ENCODE measurements at regions of chr17 and their contacts with region 1.

Region 1: GRCh38 chr17:40531051-40531991 is 29.9 kb upstream of the TNS4 start:
- DNase-seq: peak; percentile 85
- H3K4me3 Mint-ChIP-seq: peak overlapping the region; percentile 85
- H3K27ac Mint-ChIP-seq: peak overlapping the region; percentile 99
- H3K4me1 Mint-ChIP-seq: peaks cover 71% of the 10 kb centered on the region
- H3K27me3 Mint-ChIP-seq: peaks cover 2% of the 10 kb centered on the region

Region 2: DNA sequence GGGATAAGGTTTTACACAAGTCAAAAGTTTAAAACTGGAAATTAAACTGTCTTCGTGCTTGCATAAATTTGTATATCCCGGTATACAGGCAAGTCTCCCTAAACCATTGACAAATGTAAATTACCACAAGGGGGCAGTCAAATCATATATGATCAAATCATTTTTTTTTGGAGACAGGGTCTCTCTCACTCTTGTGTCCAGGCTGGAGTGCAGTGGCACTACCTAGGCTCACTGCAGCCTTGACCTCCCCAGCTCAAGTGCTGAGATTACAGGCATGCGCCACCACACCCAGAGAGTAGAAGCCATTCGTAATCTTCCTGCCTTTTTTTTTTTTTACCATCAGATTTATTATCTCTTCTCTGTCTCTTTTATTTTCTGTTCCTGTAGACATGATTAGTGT is 132.1 kb before region 1 on chr17:
- intact Hi-C with region 1: loop called (anchors 1 kb)
- DNase-seq: peak; percentile 65
- H3K4me3 Mint-ChIP-seq: no peak overlapping the region
- H3K27ac Mint-ChIP-seq: peak overlapping the region; percentile 59
- H3K4me1 Mint-ChIP-seq: peaks cover 27% of the 10 kb centered on the region
- H3K27me3 Mint-ChIP-seq: no peaks in the 10 kb centered on the region

Region 3: DNA sequence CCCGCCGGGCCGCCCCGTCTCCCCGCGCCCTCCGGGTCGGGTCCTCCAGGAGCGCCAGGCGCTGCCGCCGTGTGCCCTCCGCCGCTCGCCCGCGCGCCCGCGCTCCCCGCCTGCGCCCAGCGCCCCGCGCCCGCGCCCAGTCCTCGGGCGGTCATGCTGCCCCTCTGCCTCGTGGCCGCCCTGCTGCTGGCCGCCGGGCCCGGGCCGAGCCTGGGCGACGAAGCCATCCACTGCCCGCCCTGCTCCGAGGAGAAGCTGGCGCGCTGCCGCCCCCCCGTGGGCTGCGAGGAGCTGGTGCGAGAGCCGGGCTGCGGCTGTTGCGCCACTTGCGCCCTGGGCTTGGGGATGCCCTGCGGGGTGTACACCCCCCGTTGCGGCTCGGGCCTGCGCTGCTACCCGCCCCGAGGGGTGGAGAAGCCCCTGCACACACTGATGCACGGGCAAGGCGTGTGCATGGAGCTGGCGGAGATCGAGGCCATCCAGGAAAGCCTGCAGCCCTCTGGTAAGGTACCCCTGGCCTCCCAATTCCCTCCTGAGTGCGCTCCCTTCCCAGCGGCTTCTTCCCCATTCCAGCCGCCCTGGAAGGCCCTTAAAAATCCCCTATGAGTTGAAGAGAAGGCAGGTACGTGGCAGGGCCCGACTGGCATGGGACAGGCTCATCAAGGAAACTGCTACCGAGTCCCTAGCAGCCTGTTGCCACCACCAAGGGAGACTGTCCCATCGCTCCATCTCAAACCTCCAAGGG is 87.6 kb before region 1 on chr17:
- intact Hi-C with region 1: loop called (anchors 1 kb)
- DNase-seq: peak; percentile 93
- H3K4me3 Mint-ChIP-seq: peak overlapping the region; percentile 81
- H3K27ac Mint-ChIP-seq: peak overlapping the region; percentile 89
- H3K4me1 Mint-ChIP-seq: peaks cover 58% of the 10 kb centered on the region
- H3K27me3 Mint-ChIP-seq: peaks cover 2% of the 10 kb centered on the region

Region 4: GRCh38 chr17:40457964-40458791 is 73.1 kb before region 1 on chr17:
- intact Hi-C with region 1: no loop called
- DNase-seq: no peak
- H3K4me3 Mint-ChIP-seq: no peak overlapping the region
- H3K27ac Mint-ChIP-seq: no peak overlapping the region
- H3K4me1 Mint-ChIP-seq: peaks cover 12% of the 10 kb centered on the region
- H3K27me3 Mint-ChIP-seq: no peaks in the 10 kb centered on the region

Region 5: GRCh38 chr17:40516581-40517285 is 14.6 kb before region 1 on chr17:
- intact Hi-C with region 1: loop called (anchors 1 kb)
- DNase-seq: peak; percentile 94
- H3K4me3 Mint-ChIP-seq: peak overlapping the region; percentile 87
- H3K27ac Mint-ChIP-seq: peak overlapping the region; percentile 94
- H3K4me1 Mint-ChIP-seq: peaks cover 71% of the 10 kb centered on the region
- H3K27me3 Mint-ChIP-seq: no peaks in the 10 kb centered on the region